ENCODE measurements at regions of chr11 and their contacts with region 1.

Region 1: GRCh38 chr11:12174477-12175143 is 64.2 kb downstream of the MICAL2 start:
- DNase-seq: no peak
- H3K4me3 Mint-ChIP-seq: peak overlapping the region; percentile 19
- H3K27ac Mint-ChIP-seq: peak overlapping the region; percentile 90
- H3K4me1 Mint-ChIP-seq: peaks cover 66% of the 10 kb centered on the region
- H3K27me3 Mint-ChIP-seq: no peaks in the 10 kb centered on the region

Region 2: GRCh38 chr11:12060385-12060985 is 114.1 kb before region 1 on chr11:
- CTCF ChIA-PET with region 1: no interaction called
- intact Hi-C with region 1: no loop called
- DNase-seq: no peak
- H3K4me3 Mint-ChIP-seq: no peak overlapping the region
- H3K27ac Mint-ChIP-seq: no peak overlapping the region
- H3K4me1 Mint-ChIP-seq: no peaks in the 10 kb centered on the region
- H3K27me3 Mint-ChIP-seq: no peaks in the 10 kb centered on the region

Region 3: GRCh38 chr11:12070446-12071267 is 104.0 kb before region 1 on chr11:
- CTCF ChIA-PET with region 1: no interaction called
- intact Hi-C with region 1: no loop called
- DNase-seq: no peak
- H3K4me3 Mint-ChIP-seq: no peak overlapping the region
- H3K27ac Mint-ChIP-seq: no peak overlapping the region
- H3K4me1 Mint-ChIP-seq: no peaks in the 10 kb centered on the region
- H3K27me3 Mint-ChIP-seq: no peaks in the 10 kb centered on the region

Region 4: GRCh38 chr11:12122083-12122482 is 52.5 kb before region 1 on chr11:
- CTCF ChIA-PET with region 1: no interaction called
- intact Hi-C with region 1: loop called (anchors 1 kb)
- DNase-seq: no peak
- H3K4me3 Mint-ChIP-seq: no peak overlapping the region
- H3K27ac Mint-ChIP-seq: no peak overlapping the region
- H3K4me1 Mint-ChIP-seq: peaks cover 45% of the 10 kb centered on the region
- H3K27me3 Mint-ChIP-seq: no peaks in the 10 kb centered on the region

Region 5: GRCh38 chr11:12149672-12150225 is 24.9 kb before region 1 on chr11:
- CTCF ChIA-PET with region 1: interaction called, 3 read pairs
- intact Hi-C with region 1: loop called (anchors 1 kb)
- DNase-seq: peak; percentile 80
- H3K4me3 Mint-ChIP-seq: peak overlapping the region; percentile 3
- H3K27ac Mint-ChIP-seq: peak overlapping the region; percentile 87
- H3K4me1 Mint-ChIP-seq: peaks cover 48% of the 10 kb centered on the region
- H3K27me3 Mint-ChIP-seq: no peaks in the 10 kb centered on the region

Region 6: DNA sequence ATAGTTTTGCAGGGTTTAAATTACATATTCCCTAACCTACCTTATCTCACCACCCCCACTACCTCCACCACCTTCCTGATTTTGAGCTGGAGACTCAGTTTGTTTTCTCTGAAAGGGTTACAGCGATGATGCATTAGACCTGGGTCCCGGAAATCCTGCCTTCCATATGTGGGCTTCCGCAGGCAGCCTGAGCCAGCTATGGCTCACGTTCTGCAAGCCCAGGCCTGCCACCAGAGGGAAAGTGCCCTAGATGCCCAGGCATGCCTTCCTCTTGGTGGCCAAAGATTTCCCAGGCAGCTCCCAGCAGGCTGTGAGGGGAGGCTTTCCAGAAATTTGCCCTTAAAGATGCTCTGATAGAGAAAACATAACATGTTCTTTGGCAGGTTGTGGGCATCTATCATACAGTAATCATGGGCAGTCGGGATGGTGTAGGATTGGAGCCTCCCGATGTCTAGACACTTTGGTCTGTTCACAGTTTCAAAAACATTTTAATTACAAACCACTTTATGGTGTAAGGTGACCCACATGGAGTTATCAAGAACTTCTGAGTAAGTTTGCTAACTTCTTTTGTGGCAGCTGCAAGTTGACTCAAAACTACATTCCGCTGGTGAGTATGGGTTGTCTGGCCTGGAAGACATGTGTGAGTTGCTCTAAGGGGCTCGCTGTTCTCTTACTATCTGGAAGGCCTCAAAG is 15.1 kb after region 1 on chr11:
- CTCF ChIA-PET with region 1: interaction called, 4 read pairs
- intact Hi-C with region 1: loop called (anchors 1 kb)
- DNase-seq: no peak
- H3K4me3 Mint-ChIP-seq: no peak overlapping the region
- H3K27ac Mint-ChIP-seq: peak overlapping the region; percentile 55
- H3K4me1 Mint-ChIP-seq: peaks cover 44% of the 10 kb centered on the region
- H3K27me3 Mint-ChIP-seq: no peaks in the 10 kb centered on the region

Region 7: DNA sequence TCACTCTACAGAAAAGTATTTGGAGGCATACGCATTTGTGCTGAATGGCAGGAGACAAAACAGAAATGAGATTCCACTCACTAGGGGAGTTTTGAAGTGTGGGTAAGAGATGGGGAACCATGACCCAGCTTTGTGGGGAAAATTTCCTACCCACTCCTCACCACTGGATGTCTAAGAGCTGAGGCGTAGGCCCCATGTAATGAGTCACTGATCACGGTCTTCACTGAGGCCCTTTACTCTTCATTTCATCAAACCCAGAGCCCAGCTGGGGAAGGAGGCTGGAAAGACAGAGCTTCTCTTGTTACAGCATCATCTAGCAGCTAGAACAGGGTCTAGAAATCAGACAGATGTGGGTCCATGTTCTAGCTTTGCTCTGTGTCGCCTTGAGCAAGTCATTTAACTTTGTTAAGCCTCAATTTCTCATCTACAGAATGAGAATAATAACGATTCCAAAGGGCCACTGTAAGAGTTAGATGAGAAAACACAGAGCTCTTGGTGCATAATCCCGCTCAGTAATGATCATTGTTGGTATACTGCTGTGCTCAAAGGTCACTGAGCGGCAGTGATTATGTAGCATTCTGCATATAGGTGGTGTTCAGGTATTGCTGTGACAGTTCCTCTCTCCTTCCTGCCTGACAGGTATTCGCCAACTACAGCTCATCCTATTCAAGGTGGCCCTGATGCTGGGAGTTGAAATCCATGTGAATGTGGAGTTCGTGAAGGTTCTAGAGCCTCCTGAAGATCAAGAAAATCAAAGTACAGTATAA is 33.0 kb after region 1 on chr11:
- CTCF ChIA-PET with region 1: no interaction called
- intact Hi-C with region 1: loop called (anchors 1 kb)
- DNase-seq: peak; percentile 73
- H3K4me3 Mint-ChIP-seq: no peak overlapping the region
- H3K27ac Mint-ChIP-seq: peak overlapping the region; percentile 77
- H3K4me1 Mint-ChIP-seq: peaks cover 53% of the 10 kb centered on the region
- H3K27me3 Mint-ChIP-seq: no peaks in the 10 kb centered on the region

Region 8: DNA sequence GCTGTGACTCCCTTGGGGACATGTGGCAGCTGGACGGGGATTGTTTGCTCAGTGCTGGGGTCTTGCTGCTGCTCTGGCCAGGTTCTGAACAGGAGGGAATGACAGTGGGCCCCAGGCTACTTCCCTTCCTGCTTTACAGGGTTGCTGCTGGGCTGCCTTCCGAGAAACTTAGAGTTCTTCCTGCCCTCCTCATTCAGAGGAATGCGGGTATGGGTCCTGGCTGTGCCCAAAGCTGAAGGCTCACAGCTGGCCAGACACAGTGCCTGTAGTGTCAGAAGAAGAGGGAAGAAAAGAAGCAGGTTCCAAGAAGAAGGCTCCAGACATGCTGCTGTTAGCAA is 94.5 kb after region 1 on chr11:
- CTCF ChIA-PET with region 1: no interaction called
- intact Hi-C with region 1: no loop called
- DNase-seq: no peak
- H3K4me3 Mint-ChIP-seq: no peak overlapping the region
- H3K27ac Mint-ChIP-seq: no peak overlapping the region
- H3K4me1 Mint-ChIP-seq: no peaks in the 10 kb centered on the region
- H3K27me3 Mint-ChIP-seq: no peaks in the 10 kb centered on the region